K562 (cell line): ENCODE measurements at regions of chr2 and their contacts with region 1.

Region 1: GRCh38 chr2:231104115-231104713 is 20.6 kb downstream of the HTR2B start:
- DNase-seq: peak; percentile 12 to 41 (median 16)
- ATAC-seq: peak; percentile 89
- H3K4me3 ChIP-seq: no peak overlapping the region
- H3K27ac ChIP-seq: no peak overlapping the region
- H3K4me1 ChIP-seq: no peaks in the 10 kb centered on the region
- H3K27me3 ChIP-seq: no peaks in the 10 kb centered on the region
- CTCF ChIP-seq: peak; percentile 41 to 69 (median 52)
- EP300 ChIP-seq: no peak
- POLR2A ChIP-seq: no peak
- RAD21 ChIP-seq: peak; percentile 58 to 64

Region 2: GRCh38 chr2:231000211-231000904 is 103.9 kb before region 1 on chr2:
- CTCF ChIA-PET with region 1: no interaction called
- POLR2A ChIA-PET with region 1: no interaction called
- in situ Hi-C with region 1: no loop called
- intact Hi-C with region 1: no loop called
- DNase-seq: no peak
- ATAC-seq: no peak
- H3K4me3 ChIP-seq: no peak overlapping the region
- H3K27ac ChIP-seq: no peak overlapping the region
- H3K4me1 ChIP-seq: no peaks in the 10 kb centered on the region
- H3K27me3 ChIP-seq: peaks cover 10 to 43% of the 10 kb centered on the region in 2 experiments; a peak in 3 of 5 replicates
- CTCF ChIP-seq: no peak
- EP300 ChIP-seq: no peak
- POLR2A ChIP-seq: no peak
- RAD21 ChIP-seq: no peak

Region 3: GRCh38 chr2:231191896-231192872 is 88.0 kb after region 1 on chr2:
- CTCF ChIA-PET with region 1: interaction called, 8 read pairs
- POLR2A ChIA-PET with region 1: interaction called, 3 read pairs
- in situ Hi-C with region 1: no loop called
- intact Hi-C with region 1: loop called (anchors 5 kb)
- DNase-seq: peak; percentile 31 to 62 (median 44)
- ATAC-seq: peak; percentile 94
- H3K4me3 ChIP-seq: no peak overlapping the region
- H3K27ac ChIP-seq: no peak overlapping the region
- H3K4me1 ChIP-seq: peaks cover 4 to 8% of the 10 kb centered on the region in 2 experiments; a peak in 3 of 5 replicates
- H3K27me3 ChIP-seq: peaks cover 14 to 33% of the 10 kb centered on the region in 2 experiments
- CTCF ChIP-seq: peak; percentile 63 to 67 (median 66)
- EP300 ChIP-seq: no peak
- POLR2A ChIP-seq: no peak
- RAD21 ChIP-seq: peak; percentile 48 to 69; a peak in 3 of 4 replicates

Region 4: GRCh38 chr2:231305221-231305620 is 201.0 kb after region 1 on chr2:
- CTCF ChIA-PET with region 1: interaction called, 3 read pairs
- POLR2A ChIA-PET with region 1: no interaction called
- in situ Hi-C with region 1: no loop called
- intact Hi-C with region 1: loop called (anchors 2 kb)
- DNase-seq: no peak
- ATAC-seq: no peak
- H3K4me3 ChIP-seq: no peak overlapping the region
- H3K27ac ChIP-seq: no peak overlapping the region
- H3K4me1 ChIP-seq: no peaks in the 10 kb centered on the region
- H3K27me3 ChIP-seq: peaks cover 9 to 24% of the 10 kb centered on the region in 2 experiments; a peak in 3 of 5 replicates
- CTCF ChIP-seq: no peak
- EP300 ChIP-seq: no peak
- POLR2A ChIP-seq: no peak
- RAD21 ChIP-seq: no peak

Region 5: GRCh38 chr2:231378026-231378722 is 274.0 kb after region 1 on chr2:
- CTCF ChIA-PET with region 1: no interaction called
- POLR2A ChIA-PET with region 1: no interaction called
- in situ Hi-C with region 1: no loop called
- intact Hi-C with region 1: no loop called
- DNase-seq: no peak
- ATAC-seq: no peak
- H3K4me3 ChIP-seq: no peak overlapping the region
- H3K27ac ChIP-seq: no peak overlapping the region
- H3K4me1 ChIP-seq: peaks cover 6 to 14% of the 10 kb centered on the region in 2 experiments; a peak in 4 of 5 replicates
- H3K27me3 ChIP-seq: peaks cover 0 to 31% of the 10 kb centered on the region in 2 experiments; a peak in 2 of 5 replicates
- CTCF ChIP-seq: no peak
- EP300 ChIP-seq: no peak
- POLR2A ChIP-seq: no peak
- RAD21 ChIP-seq: no peak

Region 6: GRCh38 chr2:231452799-231453508 is 348.7 kb after region 1 on chr2:
- CTCF ChIA-PET with region 1: interaction called, 7 read pairs
- POLR2A ChIA-PET with region 1: interaction called, 15 read pairs
- in situ Hi-C with region 1: loop called (anchors 10 kb)
- intact Hi-C with region 1: loop called (anchors 5 kb)
- DNase-seq: peak in 1 of 4 experiments; percentile 33
- ATAC-seq: peak; percentile 60
- H3K4me3 ChIP-seq: no peak overlapping the region
- H3K27ac ChIP-seq: no peak overlapping the region; the same call in 2 of the 3 replicates
- H3K4me1 ChIP-seq: no peaks in the 10 kb centered on the region; a peak in 1 of 5 replicates
- H3K27me3 ChIP-seq: no peaks in the 10 kb centered on the region
- CTCF ChIP-seq: no peak
- EP300 ChIP-seq: no peak
- POLR2A ChIP-seq: peak; percentile 69; the same call in 1 of the 2 replicates
- RAD21 ChIP-seq: no peak